Right cardiac atrium (tissue), 5 donors: ENCODE measurements at regions of chr21 and their contacts with region 1.

Region 1: DNA sequence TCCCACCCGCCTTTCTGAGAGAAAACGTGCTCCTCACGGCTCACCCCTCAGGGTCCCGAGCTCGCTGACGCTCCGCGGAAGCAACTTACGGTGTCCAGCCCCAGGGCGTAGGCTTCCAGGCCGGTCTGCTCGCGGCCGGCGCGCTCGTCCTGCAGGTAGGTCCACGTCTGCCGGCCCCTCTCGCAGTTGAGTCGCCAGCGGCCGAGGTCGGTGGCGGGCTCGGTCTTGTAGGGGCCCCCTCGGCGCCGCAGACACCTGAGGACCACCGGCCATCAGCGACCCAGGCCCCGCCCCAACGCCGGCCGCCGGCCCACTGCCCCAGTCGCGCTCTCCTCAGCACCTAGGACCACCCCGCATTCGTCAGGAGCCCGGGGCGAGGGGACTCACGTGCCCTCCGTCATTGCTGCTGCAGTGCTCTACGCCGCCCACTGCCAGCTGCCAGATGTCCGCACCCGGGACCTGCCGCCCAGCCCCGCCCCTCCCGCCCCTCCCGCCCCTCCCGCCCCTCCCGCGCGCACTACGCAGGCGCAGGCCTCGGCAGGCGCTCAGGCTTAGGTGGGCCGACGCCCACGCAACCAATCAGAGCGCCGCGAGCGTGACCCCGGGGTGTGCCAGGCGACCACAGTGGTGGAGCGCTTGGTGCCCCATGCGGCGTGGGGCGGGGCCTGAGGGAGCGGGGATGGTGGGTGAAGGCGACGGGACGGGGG is at the start of gene LSS:
- DNase-seq: peak; percentile 99 to 100 (median 99)
- ATAC-seq: peak; percentile 95 to 96
- H3K4me3 ChIP-seq: peak within 1 kb of the TSS; percentile 81
- H3K27ac ChIP-seq: peak within 1 kb of the TSS; percentile 92
- H3K4me1 ChIP-seq: peaks cover 9% of the 10 kb centered on the region
- H3K27me3 ChIP-seq: no peaks in the 10 kb centered on the region
- total RNA-seq, gene LSS: 55.0 to 91.9 (median 79.7) TPM

Region 2: GRCh38 chr21:46144464-46145070 is 83.9 kb before region 1 on chr21:
- intact Hi-C with region 1: loop called in 1 of 4 experiments (anchors 10 kb)
- DNase-seq: peak in 2 of 3 donors; percentile 11 to 18
- ATAC-seq: no peak
- H3K4me3 ChIP-seq: no peak overlapping the region
- H3K27ac ChIP-seq: no peak overlapping the region
- H3K4me1 ChIP-seq: no peaks in the 10 kb centered on the region
- H3K27me3 ChIP-seq: no peaks in the 10 kb centered on the region

Region 3: GRCh38 chr21:46153247-46154150 is 75.0 kb before region 1 on chr21:
- intact Hi-C with region 1: loop called in 2 of 4 experiments (anchors 10 kb)
- DNase-seq: peak; percentile 57 to 87 (median 84)
- ATAC-seq: peak; percentile 51 to 59
- H3K4me3 ChIP-seq: no peak overlapping the region
- H3K27ac ChIP-seq: no peak overlapping the region
- H3K4me1 ChIP-seq: peaks cover 4% of the 10 kb centered on the region
- H3K27me3 ChIP-seq: no peaks in the 10 kb centered on the region